ENCODE measurements at regions of chr14 and their contacts with region 1.

Region 1: DNA sequence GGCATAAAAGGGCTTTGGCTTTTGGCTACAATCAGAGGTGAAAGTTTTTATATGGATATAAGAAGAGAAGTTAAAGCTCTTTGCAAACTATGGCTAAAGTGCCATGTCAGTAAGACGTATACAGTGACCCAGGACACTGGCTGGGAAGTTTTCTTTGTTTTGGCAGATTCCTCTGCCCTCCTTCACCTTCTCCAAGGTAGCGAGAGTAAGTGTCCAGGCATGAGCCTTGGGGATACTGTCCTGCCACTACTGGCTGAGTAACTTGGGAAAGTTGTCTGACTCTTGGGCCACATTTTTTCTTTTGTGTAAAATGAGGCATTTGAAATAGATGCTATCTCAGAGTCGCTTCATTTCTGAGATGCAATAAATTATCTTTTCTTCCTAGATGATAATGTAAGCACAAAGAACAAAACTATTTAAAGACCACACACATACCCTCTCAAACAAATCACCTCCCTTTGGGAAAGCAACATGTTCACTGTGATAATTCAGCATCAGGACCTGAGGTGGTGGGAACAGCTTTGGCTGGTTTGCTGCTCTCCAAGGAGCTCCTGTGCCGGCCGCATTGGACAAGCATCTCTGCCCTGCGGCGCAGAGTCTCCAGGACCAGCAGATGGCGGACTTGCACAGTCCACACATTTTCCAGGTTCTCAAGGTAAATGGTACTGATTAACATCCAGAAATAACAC is 106.3 kb downstream of the PTCSC3 start:
- DNase-seq: peak; percentile 14
- H3K4me3 Mint-ChIP-seq: no peak overlapping the region
- H3K27ac Mint-ChIP-seq: no peak overlapping the region
- H3K4me1 Mint-ChIP-seq: peaks cover 1% of the 10 kb centered on the region
- H3K27me3 Mint-ChIP-seq: peaks cover 27% of the 10 kb centered on the region

Region 2: DNA sequence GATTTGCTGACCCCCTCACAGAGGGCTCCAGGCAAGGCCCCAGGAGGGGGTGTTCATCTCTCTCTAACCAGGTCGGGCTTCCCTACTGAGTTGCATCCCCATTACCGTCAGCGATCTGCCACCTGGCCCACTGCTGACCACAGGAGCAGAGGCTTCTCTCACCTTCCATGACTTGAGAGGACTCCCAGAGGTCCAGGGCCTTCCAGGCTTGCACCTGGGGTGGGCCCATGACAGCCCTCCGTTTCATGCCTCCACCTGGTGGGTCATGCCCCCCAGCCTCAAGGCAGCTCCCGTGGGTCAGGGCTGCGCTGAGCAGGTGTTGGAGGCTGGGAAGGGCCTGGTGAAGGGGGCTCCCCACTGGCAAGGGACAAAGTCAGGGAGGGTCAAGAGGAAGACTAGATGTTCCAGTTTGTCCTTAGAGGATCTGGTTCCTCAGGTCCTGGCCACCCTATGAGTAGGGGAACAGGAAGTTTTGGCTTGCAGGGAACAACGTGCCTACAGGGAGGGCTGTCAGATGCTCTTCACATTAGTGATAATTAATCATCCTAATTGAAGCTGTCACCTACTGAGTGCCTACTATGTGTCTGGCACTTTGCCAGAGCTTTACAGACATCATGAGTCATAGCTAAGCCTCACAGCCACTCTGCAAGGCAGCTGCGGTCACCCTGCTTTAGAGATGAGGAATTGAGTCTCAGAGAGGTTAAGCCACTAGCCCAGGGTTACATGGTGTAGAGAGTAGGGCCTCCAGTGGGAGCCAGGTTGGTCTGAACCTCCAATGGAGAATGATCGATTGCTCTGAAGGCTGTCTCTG is 679.4 kb before region 1 on chr14:
- intact Hi-C with region 1: no loop called
- DNase-seq: no peak
- H3K4me3 Mint-ChIP-seq: no peak overlapping the region
- H3K27ac Mint-ChIP-seq: no peak overlapping the region
- H3K4me1 Mint-ChIP-seq: peaks cover 5% of the 10 kb centered on the region
- H3K27me3 Mint-ChIP-seq: no peaks in the 10 kb centered on the region

Region 3: DNA sequence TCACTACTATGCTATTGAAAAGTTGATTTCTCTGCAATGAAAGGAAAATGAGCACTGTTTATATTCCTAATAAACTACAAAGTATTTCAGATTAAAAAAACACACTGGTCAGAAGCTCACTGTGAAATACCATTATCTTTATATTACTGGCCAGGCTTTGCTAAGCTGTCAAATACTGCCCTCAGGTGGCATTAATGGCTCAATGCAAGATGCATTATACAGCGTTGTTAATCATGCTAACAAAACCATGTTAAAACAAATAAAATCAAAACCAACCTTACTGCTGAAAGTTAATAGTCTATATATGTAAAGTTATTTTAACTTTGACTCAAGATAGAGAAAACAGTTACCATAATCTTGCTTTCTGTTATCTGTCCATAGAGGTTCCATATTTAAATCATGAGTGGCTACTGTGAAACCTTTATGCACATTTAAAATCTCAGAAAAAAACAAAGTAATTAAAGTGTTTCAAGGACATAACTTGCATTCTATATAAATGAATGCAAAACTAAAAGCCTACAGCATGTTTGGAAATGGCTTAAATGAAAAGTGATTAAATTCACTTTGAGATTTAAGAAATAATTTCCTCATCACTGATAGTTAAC is 382.7 kb before region 1 on chr14:
- intact Hi-C with region 1: no loop called
- DNase-seq: no peak
- H3K4me3 Mint-ChIP-seq: no peak overlapping the region
- H3K27ac Mint-ChIP-seq: no peak overlapping the region
- H3K4me1 Mint-ChIP-seq: peaks cover 23% of the 10 kb centered on the region
- H3K27me3 Mint-ChIP-seq: no peaks in the 10 kb centered on the region

Region 4: GRCh38 chr14:35883677-35884293 is 186.4 kb before region 1 on chr14:
- intact Hi-C with region 1: loop called (anchors 1 kb)
- DNase-seq: no peak
- H3K4me3 Mint-ChIP-seq: no peak overlapping the region
- H3K27ac Mint-ChIP-seq: no peak overlapping the region
- H3K4me1 Mint-ChIP-seq: peaks cover 11% of the 10 kb centered on the region
- H3K27me3 Mint-ChIP-seq: peaks cover 14% of the 10 kb centered on the region

Region 5: DNA sequence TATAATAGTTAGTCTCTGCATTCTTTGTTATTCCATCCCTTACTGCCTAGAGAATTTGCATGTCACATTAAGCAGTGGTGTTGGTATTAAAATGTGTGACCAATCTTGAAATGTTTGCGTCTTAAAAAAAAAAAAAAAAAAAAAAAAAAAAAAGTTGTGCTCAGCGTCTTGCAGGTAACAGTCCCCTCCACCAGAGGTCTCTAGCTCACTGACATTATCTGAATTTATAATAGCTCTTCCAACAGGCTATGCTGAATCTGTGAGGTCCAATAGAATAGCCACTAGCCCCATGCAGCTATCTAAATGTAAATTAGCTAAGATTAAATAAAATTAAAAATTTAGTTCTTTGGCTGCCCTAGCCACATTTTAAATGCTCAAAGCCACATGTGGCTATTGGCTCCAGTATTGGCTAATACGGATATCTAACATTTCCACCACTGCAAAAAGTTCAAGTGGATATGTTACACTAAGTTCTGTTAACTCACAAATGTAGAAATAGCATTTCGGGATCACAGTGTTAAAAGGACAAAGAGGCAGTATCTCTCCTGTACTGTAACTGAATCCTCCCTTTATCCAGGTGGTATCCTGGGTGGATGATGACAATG is 483.6 kb after region 1 on chr14:
- intact Hi-C with region 1: loop called (anchors 2 kb)
- DNase-seq: no peak
- H3K4me3 Mint-ChIP-seq: no peak overlapping the region
- H3K27ac Mint-ChIP-seq: no peak overlapping the region
- H3K4me1 Mint-ChIP-seq: no peaks in the 10 kb centered on the region
- H3K27me3 Mint-ChIP-seq: no peaks in the 10 kb centered on the region

Region 6: GRCh38 chr14:36604757-36605505 is 534.8 kb after region 1 on chr14:
- intact Hi-C with region 1: loop called (anchors 5 kb)
- DNase-seq: no peak
- H3K4me3 Mint-ChIP-seq: no peak overlapping the region
- H3K27ac Mint-ChIP-seq: no peak overlapping the region
- H3K4me1 Mint-ChIP-seq: no peaks in the 10 kb centered on the region
- H3K27me3 Mint-ChIP-seq: peaks cover 5% of the 10 kb centered on the region

Measured in activated T-helper 2 cell treated with anti-CD3 and anti-CD28 coated beads, Interferon-gamma antibody, Interleukin-2, Interleukin-4, amounts not matched to agents 10 μg/mL and 5 μg/mL and 100 μg/mL, durations not matched to agents 14 hours and 24 hours and 36 hours (primary cell).